ENCODE measurements at regions of chr9 and their contacts with region 1.

Region 1: GRCh38 chr9:132651254-132651653 is 18.5 kb downstream of the DDX31 start:
- DNase-seq: peak; percentile 86
- H3K4me3 ChIP-seq: no peak overlapping the region
- H3K27ac ChIP-seq: peak overlapping the region; percentile 7
- H3K4me1 ChIP-seq: peaks cover 38% of the 10 kb centered on the region
- H3K27me3 ChIP-seq: no peaks in the 10 kb centered on the region
- CTCF ChIP-seq: peak; percentile 64 to 72

Region 2: GRCh38 chr9:132631303-132632084 is 19.8 kb before region 1 on chr9:
- CTCF ChIA-PET with region 1: no interaction called
- dilution Hi-C with region 1: no loop called
- in situ Hi-C with region 1: no loop called
- intact Hi-C with region 1: loop called (anchors 2 kb)
- DNase-seq: peak; percentile 94
- H3K4me3 ChIP-seq: peak overlapping the region in 1 of 3 experiments; percentile 33
- H3K27ac ChIP-seq: peak overlapping the region; percentile 86
- H3K4me1 ChIP-seq: peaks cover 35% of the 10 kb centered on the region
- H3K27me3 ChIP-seq: no peaks in the 10 kb centered on the region
- CTCF ChIP-seq: peak; percentile 12 to 33

Measured in mammary epithelial cell (primary cell).